Activated naive CD4-positive, alpha-beta T cell treated with anti-CD3 and anti-CD28 coated beads for 36 hours (primary cell): ENCODE measurements at regions of chr2 and their contacts with region 1.

Region 1: DNA sequence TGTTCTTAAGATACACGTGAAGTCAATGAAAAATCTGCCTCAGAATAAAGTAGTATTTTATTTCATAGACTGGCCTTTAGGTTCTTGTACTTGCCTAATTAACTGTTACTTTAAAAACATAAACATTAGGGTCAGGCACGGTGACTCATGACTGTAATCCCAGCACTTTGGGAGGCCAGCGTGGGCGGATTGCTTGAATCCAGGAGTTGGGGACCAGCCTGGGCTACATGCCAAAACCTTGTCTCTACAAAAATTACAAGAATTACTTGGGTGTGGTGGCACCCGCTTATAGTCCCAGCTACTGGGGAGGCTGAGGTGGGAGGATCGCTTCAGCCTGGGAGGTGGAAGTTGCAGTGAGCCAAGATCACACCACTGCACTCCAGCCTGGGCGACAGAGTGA is 16.0 kb upstream of the SNORC start:
- DNase-seq: no peak
- H3K4me3 Mint-ChIP-seq: no peak overlapping the region
- H3K27ac Mint-ChIP-seq: no peak overlapping the region
- H3K4me1 Mint-ChIP-seq: no peaks in the 10 kb centered on the region
- H3K27me3 Mint-ChIP-seq: no peaks in the 10 kb centered on the region

Region 2: GRCh38 chr2:232142049-232142448 is 712.0 kb before region 1 on chr2:
- CTCF ChIA-PET with region 1: no interaction called
- intact Hi-C with region 1: no loop called
- DNase-seq: peak; percentile 65
- H3K4me3 Mint-ChIP-seq: no peak overlapping the region
- H3K27ac Mint-ChIP-seq: no peak overlapping the region
- H3K4me1 Mint-ChIP-seq: peaks cover 37% of the 10 kb centered on the region
- H3K27me3 Mint-ChIP-seq: no peaks in the 10 kb centered on the region

Region 3: GRCh38 chr2:232761301-232761907 is 92.7 kb before region 1 on chr2:
- CTCF ChIA-PET with region 1: no interaction called
- intact Hi-C with region 1: loop called (anchors 2 kb)
- DNase-seq: peak; percentile 68
- H3K4me3 Mint-ChIP-seq: no peak overlapping the region
- H3K27ac Mint-ChIP-seq: no peak overlapping the region
- H3K4me1 Mint-ChIP-seq: peaks cover 15% of the 10 kb centered on the region
- H3K27me3 Mint-ChIP-seq: no peaks in the 10 kb centered on the region

Region 4: GRCh38 chr2:233026192-233026813 is 172.2 kb after region 1 on chr2:
- CTCF ChIA-PET with region 1: no interaction called
- intact Hi-C with region 1: loop called (anchors 5 kb)
- DNase-seq: no peak
- H3K4me3 Mint-ChIP-seq: no peak overlapping the region
- H3K27ac Mint-ChIP-seq: no peak overlapping the region
- H3K4me1 Mint-ChIP-seq: no peaks in the 10 kb centered on the region
- H3K27me3 Mint-ChIP-seq: no peaks in the 10 kb centered on the region